Psoas muscle (tissue), 8 donors: ENCODE measurements at regions of chr2 and their contacts with region 1.

Region 1: DNA sequence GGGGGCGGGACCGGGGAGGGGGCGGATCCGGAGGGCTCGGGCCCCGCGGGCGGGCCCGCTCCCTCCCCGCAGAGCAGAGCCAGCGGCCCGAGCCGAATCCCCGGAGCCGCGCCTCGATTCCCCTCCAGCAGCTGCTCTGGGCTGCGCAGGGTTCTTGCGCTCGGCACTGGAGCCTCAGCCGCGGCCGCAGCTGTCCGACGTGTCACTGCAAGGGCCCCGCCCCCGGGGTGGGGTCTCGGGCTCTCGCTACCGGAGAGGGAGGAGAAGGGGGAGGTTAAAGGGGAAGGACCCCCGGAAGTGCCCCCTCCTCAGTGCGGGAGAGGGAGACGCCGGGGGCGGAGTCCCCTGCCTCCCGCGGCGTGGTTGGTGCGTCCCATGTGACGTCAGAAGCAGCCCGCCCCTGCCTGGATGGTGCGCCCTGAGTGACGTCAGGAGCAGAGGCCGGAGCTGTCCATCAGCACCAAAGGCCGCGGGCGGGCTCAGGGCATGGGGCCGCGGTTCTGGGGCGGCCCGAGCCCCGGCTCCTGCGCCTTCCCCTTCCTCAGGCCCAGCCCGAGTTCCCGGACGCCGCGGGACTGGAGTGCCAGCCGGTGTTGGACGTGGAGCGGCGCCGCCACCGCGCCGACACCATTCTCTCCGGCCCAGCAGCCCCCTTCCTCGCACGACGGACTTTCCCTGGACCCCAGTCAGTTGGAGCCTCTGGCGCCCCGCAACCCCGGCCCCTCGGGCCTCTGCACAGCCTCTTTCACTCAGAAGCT is at the starts of genes CHPF and TMEM198:
- DNase-seq: peak; percentile 98 to 99
- ATAC-seq: peak; percentile 91 to 93 (median 92)
- H3K4me3 ChIP-seq: peak within 1 kb of the TSS; percentile 79
- H3K27ac ChIP-seq: peak within 1 kb of the TSS; percentile 94
- H3K4me1 ChIP-seq: peaks cover 23% of the 10 kb centered on the region
- H3K27me3 ChIP-seq: no peaks in the 10 kb centered on the region
- CTCF ChIP-seq: no peak
- total RNA-seq, gene CHPF: 11.9 to 14.2 (median 13.1) TPM
- total RNA-seq, gene TMEM198: 0.88 to 3.1 (median 2.0) TPM

Region 2: GRCh38 chr2:219484343-219485200 is 59.2 kb before region 1 on chr2:
- intact Hi-C with region 1: no loop called
- DNase-seq: no peak
- ATAC-seq: no peak
- H3K4me3 ChIP-seq: peak overlapping the region; percentile 22
- H3K27ac ChIP-seq: no peak overlapping the region
- H3K4me1 ChIP-seq: peaks cover 5% of the 10 kb centered on the region
- H3K27me3 ChIP-seq: no peaks in the 10 kb centered on the region
- CTCF ChIP-seq: no peak

Region 3: DNA sequence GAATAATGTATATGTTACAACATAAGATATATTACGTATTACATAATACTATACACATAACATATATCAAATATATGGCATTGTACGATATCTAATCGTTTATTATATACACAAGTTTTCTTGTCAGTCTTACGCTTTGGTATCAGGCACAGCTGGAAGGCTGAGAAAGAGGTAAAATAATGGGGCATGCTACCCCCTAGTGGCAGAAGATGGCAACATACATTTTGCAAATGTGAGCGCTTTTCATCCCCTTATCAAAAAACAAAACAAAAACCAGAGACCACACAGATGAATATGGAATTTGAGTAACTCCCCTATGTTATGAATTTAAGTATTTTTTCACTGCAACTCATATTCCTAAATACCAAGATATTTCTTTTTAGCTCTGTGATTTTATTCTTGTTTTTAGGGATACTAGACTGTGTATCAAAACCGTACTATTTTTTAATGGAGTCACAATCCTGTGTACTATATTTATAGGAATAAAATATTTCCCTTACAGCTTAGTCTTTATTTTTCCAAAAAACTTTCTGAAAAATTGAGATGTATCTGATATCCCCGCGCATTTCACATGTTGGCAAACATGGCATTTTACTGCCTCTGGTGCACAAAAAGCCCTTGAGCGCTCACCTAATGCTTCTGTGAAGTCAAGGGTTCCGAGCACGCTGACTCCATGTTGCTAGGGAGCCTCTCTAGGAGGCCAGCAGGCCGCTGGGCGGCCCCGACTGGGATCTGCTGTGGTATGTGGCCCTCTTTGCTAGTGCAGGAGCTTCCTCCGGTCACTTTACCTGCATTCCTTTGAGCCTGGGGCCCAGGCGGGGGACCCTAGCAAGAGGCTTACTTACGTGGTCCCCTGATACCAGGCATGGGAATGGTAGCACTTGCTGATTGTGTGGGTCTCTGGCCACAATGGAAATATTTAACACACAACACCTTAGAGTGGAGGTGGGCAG is 146.2 kb after region 1 on chr2:
- intact Hi-C with region 1: loop called (anchors 5 kb)
- DNase-seq: no peak
- ATAC-seq: peak; percentile 62 to 73 (median 68)
- H3K4me3 ChIP-seq: no peak overlapping the region
- H3K27ac ChIP-seq: no peak overlapping the region
- H3K4me1 ChIP-seq: peaks cover 9% of the 10 kb centered on the region
- H3K27me3 ChIP-seq: no peaks in the 10 kb centered on the region
- CTCF ChIP-seq: peak; percentile 83

Region 4: GRCh38 chr2:220034426-220035130 is 490.8 kb after region 1 on chr2:
- intact Hi-C with region 1: no loop called
- DNase-seq: no peak
- ATAC-seq: no peak
- H3K4me3 ChIP-seq: no peak overlapping the region
- H3K27ac ChIP-seq: no peak overlapping the region
- H3K4me1 ChIP-seq: no peaks in the 10 kb centered on the region
- H3K27me3 ChIP-seq: no peaks in the 10 kb centered on the region
- CTCF ChIP-seq: no peak